ENCODE measurements at regions of chr1 and their contacts with region 1.

Region 1: DNA sequence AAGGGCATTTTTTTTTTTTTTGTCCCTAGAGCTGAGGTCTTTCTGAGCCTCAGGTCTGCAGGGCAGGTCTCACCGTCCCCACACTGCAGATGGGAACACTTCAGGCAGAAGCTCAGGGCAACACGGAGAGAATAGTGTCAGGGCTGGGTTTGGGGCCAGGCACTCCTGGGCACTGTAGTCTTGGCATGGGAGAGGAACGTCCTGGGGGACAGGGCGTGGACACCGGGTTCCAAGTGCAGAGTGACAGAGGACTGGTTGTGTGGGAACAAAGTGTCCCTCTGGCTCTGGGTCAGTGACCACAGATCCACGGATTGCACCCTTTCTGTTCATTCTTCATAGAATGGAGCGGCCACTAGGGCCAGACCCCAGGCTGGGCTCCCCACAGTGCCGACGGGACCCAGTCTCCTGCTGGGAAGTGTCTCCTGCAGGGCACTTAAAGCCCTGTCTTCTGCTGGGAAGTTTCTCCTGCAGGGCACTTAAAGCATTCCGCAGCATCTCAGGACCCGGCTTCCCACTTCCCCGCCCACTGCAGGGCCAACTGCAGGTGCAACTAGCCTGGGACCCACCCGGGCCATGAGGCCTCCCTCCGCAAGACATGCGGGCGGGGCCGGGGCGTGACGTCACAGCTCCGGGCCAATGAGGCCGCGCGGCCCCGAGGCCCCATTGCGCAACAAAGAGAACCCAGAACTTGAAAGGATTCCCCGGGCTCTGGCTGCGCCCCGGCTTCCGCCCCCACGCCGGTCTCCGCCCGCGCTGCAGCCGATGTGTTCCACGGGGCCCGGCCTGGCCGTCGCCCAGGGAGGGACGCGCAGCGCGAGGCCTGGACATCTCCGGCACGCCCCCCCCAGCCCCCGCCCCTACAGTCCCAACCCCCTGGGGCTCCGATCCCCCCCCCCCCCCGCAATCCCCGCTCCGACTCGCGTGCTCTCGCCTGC is 1.1 kb downstream of the GPR153 start:
- DNase-seq: peak; percentile 84
- H3K4me3 ChIP-seq: peak overlapping the region; percentile 64 to 75 (median 68)
- H3K27ac ChIP-seq: no peak overlapping the region
- H3K4me1 ChIP-seq: peaks cover 24% of the 10 kb centered on the region
- H3K27me3 ChIP-seq: no peaks in the 10 kb centered on the region
- CTCF ChIP-seq: no peak

Region 2: DNA sequence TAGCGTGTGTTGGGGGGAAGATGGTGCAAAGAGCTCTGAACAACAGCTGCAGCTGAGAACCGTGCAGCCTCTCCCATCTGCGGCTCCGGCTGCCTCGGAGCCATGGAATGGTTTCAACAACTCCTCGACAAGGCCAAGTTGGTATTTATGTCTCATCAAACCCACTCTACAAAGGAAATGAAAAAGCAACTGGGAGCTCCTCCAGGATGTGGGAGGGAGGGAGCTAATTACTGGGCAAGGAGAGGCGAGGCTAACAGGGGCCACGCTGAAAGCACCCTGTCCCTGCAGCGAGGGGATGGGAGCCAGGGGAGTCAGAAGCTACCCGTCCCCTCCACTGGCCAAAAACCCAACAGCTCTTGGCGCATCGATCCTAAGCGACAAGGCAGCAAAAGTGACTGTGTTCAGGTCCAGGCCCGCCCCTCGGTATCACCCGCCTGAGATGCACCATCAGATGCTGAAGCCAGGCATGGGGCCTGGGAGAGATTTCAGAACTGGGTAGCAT is 70.7 kb after region 1 on chr1:
- CTCF ChIA-PET with region 1: no interaction called
- dilution Hi-C with region 1: loop called (anchors 5 kb)
- in situ Hi-C with region 1: no loop called
- intact Hi-C with region 1: no loop called
- DNase-seq: no peak
- H3K4me3 ChIP-seq: no peak overlapping the region
- H3K27ac ChIP-seq: no peak overlapping the region
- H3K4me1 ChIP-seq: peaks cover 9% of the 10 kb centered on the region
- H3K27me3 ChIP-seq: no peaks in the 10 kb centered on the region
- CTCF ChIP-seq: no peak

Region 3: DNA sequence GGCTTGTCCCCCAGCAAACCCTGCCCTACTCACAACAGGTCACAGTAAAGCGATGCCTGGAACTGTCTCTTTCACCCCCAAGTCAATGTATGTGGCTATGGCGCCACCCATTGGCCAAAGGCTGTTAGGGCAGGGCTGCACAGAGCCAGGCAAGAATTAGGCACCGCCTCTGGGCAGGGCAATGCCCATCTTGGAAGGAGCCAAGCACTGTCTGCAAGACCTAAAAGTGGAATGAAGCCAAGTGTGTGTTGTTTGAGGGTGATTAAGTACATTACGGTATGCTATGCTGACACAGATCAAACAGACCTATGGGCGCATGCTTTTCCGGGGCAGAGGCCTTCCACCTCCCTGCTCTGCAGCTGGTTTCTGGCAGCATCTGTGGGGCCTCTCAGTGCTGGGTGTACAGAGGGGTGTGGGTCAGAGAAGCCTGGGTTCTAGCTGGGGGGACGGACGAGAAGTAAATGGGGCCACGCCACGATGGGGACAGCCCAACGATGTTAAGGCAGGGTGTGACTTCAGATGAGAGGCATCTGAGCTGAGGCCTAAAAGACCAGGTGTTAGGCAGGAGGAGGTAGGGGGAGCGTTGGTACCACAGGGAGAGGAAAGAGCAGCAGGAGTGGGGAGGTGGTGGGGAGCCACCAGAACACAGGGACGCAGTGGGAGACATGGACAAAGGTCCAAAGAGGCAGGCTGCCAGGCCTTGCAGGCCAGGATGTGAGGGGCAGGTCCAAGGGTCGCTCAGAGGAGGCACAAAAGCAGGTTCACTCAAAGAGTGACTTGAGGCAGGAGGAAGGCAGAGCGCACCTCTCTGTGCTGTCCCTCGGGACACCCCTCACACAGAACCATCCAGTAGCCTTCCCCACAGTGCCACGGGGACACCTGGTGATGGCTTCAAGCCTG is 84.0 kb after region 1 on chr1:
- CTCF ChIA-PET with region 1: no interaction called
- dilution Hi-C with region 1: no loop called
- in situ Hi-C with region 1: loop called in 1 of 2 experiments (anchors 5 kb)
- intact Hi-C with region 1: no loop called
- DNase-seq: peak; percentile 94
- H3K4me3 ChIP-seq: no peak overlapping the region
- H3K27ac ChIP-seq: no peak overlapping the region
- H3K4me1 ChIP-seq: peaks cover 33% of the 10 kb centered on the region
- H3K27me3 ChIP-seq: no peaks in the 10 kb centered on the region
- CTCF ChIP-seq: peak; percentile 97 to 100

Region 4: DNA sequence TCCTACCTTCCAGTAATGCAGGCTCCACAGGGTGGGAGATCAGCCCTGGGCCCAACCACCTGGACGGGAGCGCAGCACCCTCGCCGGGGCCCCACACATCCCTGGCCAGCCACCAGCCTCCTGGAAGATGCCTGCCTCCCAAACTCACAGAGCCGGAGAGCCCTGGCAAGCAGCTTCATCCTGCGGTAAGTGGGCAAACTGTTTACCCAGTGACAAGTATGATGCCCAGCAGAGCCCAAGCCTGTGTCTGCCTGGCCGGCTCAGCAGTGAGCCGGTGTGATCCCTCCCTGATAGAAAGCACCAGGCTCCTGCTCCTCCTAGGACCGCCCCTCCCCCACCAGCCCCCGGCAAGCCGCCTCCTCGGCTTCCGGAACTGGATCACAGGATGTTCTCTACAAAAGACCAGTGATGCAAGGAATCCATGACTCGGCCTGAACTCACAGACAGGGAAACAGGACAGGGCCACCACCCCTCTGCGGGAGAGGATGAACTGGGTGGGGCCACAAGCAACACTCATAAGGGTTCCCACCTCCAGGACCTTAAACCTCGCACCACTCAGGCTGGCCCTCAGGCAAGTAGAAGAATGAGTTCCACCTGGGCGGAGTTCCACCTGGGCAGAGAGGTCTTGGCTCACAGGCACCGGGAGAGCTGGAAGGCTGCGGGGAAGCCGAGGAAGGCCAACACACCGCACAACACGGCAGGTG is 125.9 kb after region 1 on chr1:
- CTCF ChIA-PET with region 1: interaction called, 10 read pairs
- dilution Hi-C with region 1: no loop called
- in situ Hi-C with region 1: no loop called
- intact Hi-C with region 1: no loop called
- DNase-seq: peak; percentile 99
- H3K4me3 ChIP-seq: peak overlapping the region; percentile 52 to 65 (median 60)
- H3K27ac ChIP-seq: peak overlapping the region; percentile 84
- H3K4me1 ChIP-seq: peaks cover 34% of the 10 kb centered on the region
- H3K27me3 ChIP-seq: no peaks in the 10 kb centered on the region
- CTCF ChIP-seq: no peak

Region 5: GRCh38 chr1:6414443-6414844 is 154.7 kb after region 1 on chr1:
- CTCF ChIA-PET with region 1: no interaction called
- dilution Hi-C with region 1: no loop called
- in situ Hi-C with region 1: loop called in 1 of 2 experiments (anchors 25 kb)
- intact Hi-C with region 1: no loop called
- DNase-seq: peak; percentile 100
- H3K4me3 ChIP-seq: no peak overlapping the region
- H3K27ac ChIP-seq: peak overlapping the region; percentile 96
- H3K4me1 ChIP-seq: peaks cover 51% of the 10 kb centered on the region
- H3K27me3 ChIP-seq: no peaks in the 10 kb centered on the region
- CTCF ChIP-seq: peak; percentile 62 to 73

Measured in mammary epithelial cell (primary cell).